ENCODE measurements at regions of chr1 and their contacts with region 1.

Region 1: DNA sequence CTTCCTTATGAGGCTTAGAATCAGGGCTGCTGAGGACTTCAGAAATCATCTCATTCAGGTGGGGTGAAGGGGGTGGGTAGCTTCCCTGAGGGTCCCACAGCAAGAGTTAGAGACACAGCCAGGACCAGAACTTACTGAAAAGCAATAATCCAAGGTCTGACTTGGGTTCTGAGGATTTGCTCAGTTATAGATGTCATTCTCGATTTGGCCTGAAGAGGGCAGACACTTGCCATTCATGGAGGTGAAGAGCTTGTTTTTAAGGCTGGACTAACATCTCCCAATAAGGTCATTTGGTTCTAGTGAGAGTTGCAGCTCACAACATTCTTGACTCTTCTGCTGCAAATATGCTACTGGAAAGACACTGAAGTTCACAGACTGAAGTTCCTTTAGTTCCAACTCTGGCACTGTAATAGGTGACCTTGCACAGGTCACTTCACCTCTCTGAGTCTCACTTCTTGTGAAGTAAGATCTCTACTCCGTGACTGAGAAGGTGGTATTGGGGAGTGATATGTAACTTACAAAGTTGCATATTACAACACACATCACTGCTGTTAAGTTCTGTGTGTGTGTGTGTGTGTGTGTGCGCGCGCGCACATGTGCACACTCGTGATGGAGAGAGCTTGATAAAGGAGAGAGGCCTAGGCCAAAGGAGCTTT is 69.8 kb upstream of the DIRAS3 start:
- DNase-seq: peak; percentile 60
- ATAC-seq: peak; percentile 58
- H3K4me3 Mint-ChIP-seq: no peak overlapping the region
- H3K27ac Mint-ChIP-seq: no peak overlapping the region
- H3K4me1 Mint-ChIP-seq: no peaks in the 10 kb centered on the region
- H3K27me3 Mint-ChIP-seq: no peaks in the 10 kb centered on the region

Region 2: DNA sequence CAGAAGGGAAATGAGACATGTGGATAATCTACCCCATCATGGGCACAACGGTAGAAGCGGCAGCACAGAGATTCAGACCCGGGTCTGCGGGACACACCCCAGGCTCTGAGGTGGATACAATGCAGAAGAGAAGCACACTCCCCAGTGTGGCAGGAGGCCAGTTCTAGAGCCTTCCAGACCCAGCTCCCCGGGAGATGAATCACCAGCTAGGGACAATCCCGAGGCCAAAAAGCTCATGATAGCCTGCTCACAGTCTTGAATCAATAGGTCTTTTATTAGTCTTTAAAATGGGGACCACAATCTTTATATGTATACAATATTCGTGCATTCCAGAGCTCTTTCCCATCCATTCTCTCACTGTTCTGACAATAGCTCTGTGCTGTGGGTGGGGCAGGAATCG is 12.5 kb before region 1 on chr1:
- CTCF ChIA-PET with region 1: interaction called, 18 read pairs
- POLR2A ChIA-PET with region 1: no interaction called
- DNase-seq: no peak
- ATAC-seq: no peak
- H3K4me3 Mint-ChIP-seq: no peak overlapping the region
- H3K27ac Mint-ChIP-seq: no peak overlapping the region
- H3K4me1 Mint-ChIP-seq: no peaks in the 10 kb centered on the region
- H3K27me3 Mint-ChIP-seq: peaks cover 3% of the 10 kb centered on the region

Region 3: GRCh38 chr1:68346188-68346808 is 226.0 kb after region 1 on chr1:
- CTCF ChIA-PET with region 1: interaction called, 14 read pairs
- POLR2A ChIA-PET with region 1: no interaction called
- DNase-seq: no peak
- ATAC-seq: no peak
- H3K4me3 Mint-ChIP-seq: no peak overlapping the region
- H3K27ac Mint-ChIP-seq: no peak overlapping the region
- H3K4me1 Mint-ChIP-seq: peaks cover 1% of the 10 kb centered on the region
- H3K27me3 Mint-ChIP-seq: no peaks in the 10 kb centered on the region

Region 4: GRCh38 chr1:68442822-68443556 is 322.7 kb after region 1 on chr1:
- CTCF ChIA-PET with region 1: interaction called, 12 read pairs
- POLR2A ChIA-PET with region 1: no interaction called
- DNase-seq: peak; percentile 22
- ATAC-seq: no peak
- H3K4me3 Mint-ChIP-seq: no peak overlapping the region
- H3K27ac Mint-ChIP-seq: no peak overlapping the region
- H3K4me1 Mint-ChIP-seq: no peaks in the 10 kb centered on the region
- H3K27me3 Mint-ChIP-seq: no peaks in the 10 kb centered on the region

Region 5: DNA sequence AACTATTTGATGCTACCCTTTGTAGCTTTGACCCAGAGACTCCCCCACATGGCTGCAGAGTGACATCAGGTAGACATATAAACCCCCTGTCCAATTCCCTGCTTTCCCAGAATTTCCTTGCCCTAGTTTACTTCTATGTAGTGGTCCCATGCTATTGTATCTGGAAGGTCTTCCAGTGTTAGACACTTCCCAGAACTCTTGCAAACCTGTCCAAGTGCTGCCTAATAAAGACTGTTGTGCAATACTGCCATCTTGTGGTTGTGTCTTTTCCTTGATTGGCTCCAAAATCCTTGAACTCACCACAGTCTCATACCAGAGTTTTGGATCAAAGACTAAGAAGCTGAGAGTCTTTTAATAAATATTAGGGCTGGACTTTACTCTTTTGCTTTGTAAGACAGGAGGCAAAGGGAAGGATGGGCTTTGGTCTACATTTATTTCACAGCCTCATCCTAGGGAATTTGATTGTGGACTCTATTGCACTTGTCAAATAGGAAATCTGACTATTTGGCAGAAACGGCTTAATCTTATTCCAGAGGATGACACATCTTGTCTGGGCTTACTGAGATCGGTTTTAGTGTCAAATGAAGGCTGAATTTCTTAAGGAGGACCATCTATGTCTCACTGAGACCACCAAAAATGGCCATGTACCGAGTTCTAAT is 1617.4 kb after region 1 on chr1:
- CTCF ChIA-PET with region 1: interaction called, 15 read pairs
- POLR2A ChIA-PET with region 1: no interaction called
- DNase-seq: peak; percentile 47
- ATAC-seq: peak; percentile 58
- H3K4me3 Mint-ChIP-seq: no peak overlapping the region
- H3K27ac Mint-ChIP-seq: no peak overlapping the region
- H3K4me1 Mint-ChIP-seq: no peaks in the 10 kb centered on the region
- H3K27me3 Mint-ChIP-seq: no peaks in the 10 kb centered on the region

Measured in activated CD8-positive, alpha-beta T cell treated with anti-CD3 and anti-CD28 coated beads, Interleukin-2, amount 10 ng/mL, durations not matched to agents 7 days and 5 days (primary cell).